Ascending aorta (tissue), 2 donors: ENCODE measurements at regions of chr19 and their contacts with region 1.

Region 1: DNA sequence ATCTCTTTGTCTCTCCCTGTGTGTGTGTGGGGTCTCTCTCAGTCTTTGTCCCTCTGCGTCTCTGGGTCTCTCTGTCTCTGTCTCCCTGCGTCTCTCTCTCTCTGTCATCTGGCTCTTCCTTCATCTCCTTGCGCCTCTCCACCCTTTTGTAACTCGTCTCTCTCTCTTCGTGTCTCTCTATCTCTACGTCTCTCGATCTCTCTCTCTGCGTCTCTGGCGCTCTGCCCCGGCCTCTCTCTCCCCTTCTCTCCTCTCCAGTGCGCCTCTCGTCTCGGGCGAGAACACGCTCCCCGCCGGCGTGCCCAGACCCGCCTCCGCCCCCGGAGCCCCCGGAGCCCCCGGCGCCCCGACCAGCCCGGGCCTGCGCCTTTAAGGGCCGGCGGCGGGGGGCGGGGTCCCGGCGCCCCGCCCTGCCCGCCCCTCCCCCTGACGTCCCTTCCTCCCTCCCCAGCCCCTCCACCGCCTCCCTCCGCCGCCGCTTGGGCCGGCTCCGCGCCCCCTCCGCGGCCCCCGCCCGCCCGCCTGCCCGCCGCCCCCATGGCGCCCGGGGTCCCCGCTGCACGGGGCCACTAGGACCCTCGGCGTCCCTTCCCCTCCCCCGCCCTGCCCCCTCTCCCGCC is at the start of gene MARK4:
- DNase-seq: peak in 1 of 2 donors; percentile 68
- H3K4me3 ChIP-seq: peak within 1 kb of the TSS; percentile 83 to 99
- H3K27ac ChIP-seq: peak within 1 kb of the TSS; percentile 58 to 65
- H3K4me1 ChIP-seq: peaks cover 2 to 26% of the 10 kb centered on the region in 2 donors
- H3K27me3 ChIP-seq: no peaks in the 10 kb centered on the region
- CTCF ChIP-seq: no peak
- total RNA-seq, gene MARK4: 22.8 TPM

Region 2: GRCh38 chr19:45164577-45165335 is 86.2 kb before region 1 on chr19:
- intact Hi-C with region 1: loop called (anchors 5 kb)
- DNase-seq: no peak
- H3K4me3 ChIP-seq: no peak overlapping the region
- H3K27ac ChIP-seq: no peak overlapping the region
- H3K4me1 ChIP-seq: no peaks in the 10 kb centered on the region
- H3K27me3 ChIP-seq: peaks cover 6% of the 10 kb centered on the region
- CTCF ChIP-seq: no peak

Region 3: DNA sequence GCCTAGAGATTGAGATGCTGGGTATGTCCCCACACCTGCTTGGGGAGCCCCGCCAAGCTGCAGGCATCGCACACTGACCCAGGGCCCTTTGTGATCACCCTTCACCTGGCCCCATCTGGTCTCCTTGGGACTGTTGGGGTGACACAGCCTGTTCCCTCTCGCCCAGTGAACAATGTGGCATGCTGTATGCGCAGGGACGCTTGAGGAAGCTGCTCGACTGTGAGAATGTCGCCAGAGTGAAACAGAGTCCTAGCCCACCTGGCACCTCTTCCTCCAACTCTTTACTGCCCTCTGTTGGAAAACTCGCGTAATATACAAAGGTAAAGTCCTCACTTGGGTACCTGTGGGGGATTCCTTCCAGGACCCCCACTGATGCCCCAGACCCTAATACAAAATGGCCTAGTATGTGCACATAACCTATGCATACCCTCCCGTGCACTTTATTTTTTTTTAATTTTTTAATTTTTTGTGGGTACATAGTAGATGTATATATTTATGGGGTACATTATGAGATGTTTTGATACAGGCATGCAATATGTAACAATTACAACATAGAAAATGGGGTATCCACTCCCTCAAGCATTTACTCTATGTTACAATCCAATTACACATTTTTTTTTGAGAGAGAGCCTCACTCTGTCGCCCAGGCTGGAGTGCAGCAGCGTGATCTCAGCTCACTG is 63.4 kb before region 1 on chr19:
- intact Hi-C with region 1: no loop called
- DNase-seq: no peak
- H3K4me3 ChIP-seq: no peak overlapping the region
- H3K27ac ChIP-seq: no peak overlapping the region
- H3K4me1 ChIP-seq: no peaks in the 10 kb centered on the region
- H3K27me3 ChIP-seq: no peaks in the 10 kb centered on the region
- CTCF ChIP-seq: peak in 2 of 3 experiments; percentile 11 to 37

Region 4: DNA sequence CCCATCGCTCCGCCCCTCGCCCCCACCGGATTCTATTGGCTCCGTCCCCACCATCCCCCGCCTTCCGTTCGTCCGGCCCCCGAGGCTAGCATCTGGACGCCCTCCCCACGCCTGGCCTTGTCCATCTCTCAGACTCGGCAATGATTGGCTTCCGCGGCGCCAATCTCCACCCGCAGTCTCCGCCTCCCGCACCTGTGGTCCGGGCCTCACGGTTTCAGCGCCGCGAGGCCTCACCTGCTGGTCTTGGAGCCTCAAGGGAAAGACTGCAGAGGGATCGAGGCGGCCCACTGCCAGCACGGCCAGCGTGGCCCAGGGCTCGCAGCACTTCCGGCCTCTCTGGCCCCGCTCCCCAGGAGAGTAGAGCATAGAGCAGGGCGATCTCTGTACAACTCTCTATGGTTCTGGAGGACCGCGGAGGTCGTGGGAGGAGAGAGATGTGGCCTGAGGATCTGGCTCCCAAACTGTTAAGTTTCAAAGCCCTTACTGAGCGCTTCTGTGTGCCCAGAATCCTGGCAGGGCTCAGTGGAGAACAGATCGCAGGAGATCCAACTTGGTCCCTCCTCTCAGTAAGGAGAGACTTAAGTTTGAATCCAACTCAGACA is 172.7 kb after region 1 on chr19 and contains the start of gene ERCC1:
- intact Hi-C with region 1: no loop called
- DNase-seq: peak; percentile 76 to 98
- H3K4me3 ChIP-seq: peak within 1 kb of the TSS; percentile 69 to 85
- H3K27ac ChIP-seq: peak within 1 kb of the TSS; percentile 89 to 95
- H3K4me1 ChIP-seq: peaks cover 0 to 32% of the 10 kb centered on the region in 2 donors
- H3K27me3 ChIP-seq: no peaks in the 10 kb centered on the region
- CTCF ChIP-seq: no peak
- total RNA-seq, gene ERCC1: 142 TPM